Breast epithelium (tissue), 4 donors: ENCODE measurements at regions of chr2 and their contacts with region 1.

Region 1: DNA sequence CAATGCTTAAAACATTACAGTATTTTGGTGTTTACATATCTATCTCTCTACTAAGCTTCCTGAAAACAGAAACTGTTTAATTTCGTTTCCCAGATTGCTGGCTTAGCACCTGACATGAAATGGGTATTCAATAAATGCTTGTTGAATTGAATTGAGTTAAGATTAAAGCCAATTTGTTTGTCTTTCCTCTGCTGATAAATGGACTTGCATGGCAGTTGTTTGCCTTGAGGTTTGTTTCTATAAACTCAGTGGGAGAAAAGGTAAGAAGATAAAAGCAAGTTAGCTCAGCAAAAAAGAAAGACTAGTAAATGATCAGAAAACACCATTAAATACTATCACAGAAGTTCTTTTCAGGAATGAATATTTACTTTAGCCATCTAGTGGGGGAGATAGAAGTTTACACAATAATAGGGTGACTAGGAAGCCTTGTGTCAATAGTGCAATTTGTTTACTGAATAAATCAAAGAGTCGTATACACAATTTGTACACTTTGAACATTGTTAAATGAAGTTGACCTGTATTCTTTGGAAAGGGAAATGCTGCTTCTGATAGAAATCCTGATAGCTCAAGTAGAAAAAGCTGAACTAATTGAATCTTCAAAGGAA is 754.5 kb upstream of the FAM98A start:
- DNase-seq: no peak
- H3K4me3 ChIP-seq: no peak overlapping the region
- H3K27ac ChIP-seq: no peak overlapping the region
- H3K4me1 ChIP-seq: no peaks in the 10 kb centered on the region
- H3K27me3 ChIP-seq: no peaks in the 10 kb centered on the region
- CTCF ChIP-seq: no peak
- POLR2A ChIP-seq: no peak

Region 2: GRCh38 chr2:34112161-34112560 is 241.4 kb before region 1 on chr2:
- intact Hi-C with region 1: loop called (anchors 5 kb)
- DNase-seq: no peak
- H3K4me3 ChIP-seq: no peak overlapping the region
- H3K27ac ChIP-seq: no peak overlapping the region
- H3K4me1 ChIP-seq: no peaks in the 10 kb centered on the region
- H3K27me3 ChIP-seq: no peaks in the 10 kb centered on the region
- CTCF ChIP-seq: no peak
- POLR2A ChIP-seq: no peak